ENCODE measurements at regions of chr6 and their contacts with region 1.

Region 1: GRCh38 chr6:75934643-75935472 is 137.6 kb downstream of the IMPG1 start:
- DNase-seq: peak in 1 of 2 donors; percentile 69
- H3K4me3 ChIP-seq: peak overlapping the region; percentile 51 to 60
- H3K27ac ChIP-seq: no peak overlapping the region
- H3K4me1 ChIP-seq: peaks cover 0 to 12% of the 10 kb centered on the region in 2 donors
- H3K27me3 ChIP-seq: no peaks in the 10 kb centered on the region
- CTCF ChIP-seq: peak; percentile 22 to 81 (median 67)

Region 2: DNA sequence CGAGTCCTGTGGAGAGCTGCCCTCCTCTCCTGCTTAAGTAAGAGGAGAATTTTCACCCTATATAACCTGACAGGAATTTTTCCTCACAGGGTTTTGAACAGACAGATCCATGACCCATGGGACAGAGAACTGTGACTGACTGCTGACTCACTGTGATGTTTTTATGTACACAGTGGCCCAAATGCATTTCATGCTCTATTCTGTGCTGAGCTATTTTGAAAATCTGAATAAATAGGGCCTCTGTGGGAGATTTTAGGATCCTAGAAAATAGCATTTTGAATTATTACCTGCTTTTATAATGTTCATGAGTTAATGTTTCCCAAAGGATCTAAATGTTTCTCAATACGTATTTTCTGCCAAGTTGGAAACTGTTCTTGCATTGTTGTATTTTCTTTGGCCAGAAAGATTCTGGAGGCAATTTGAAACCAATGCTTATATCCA is 951.0 kb after region 1 on chr6:
- intact Hi-C with region 1: loop called (anchors 10 kb)
- DNase-seq: peak in 1 of 2 donors; percentile 64
- H3K4me3 ChIP-seq: no peak overlapping the region
- H3K27ac ChIP-seq: peak overlapping the region; percentile 1 to 76
- H3K4me1 ChIP-seq: peaks cover 0 to 12% of the 10 kb centered on the region in 2 donors
- H3K27me3 ChIP-seq: no peaks in the 10 kb centered on the region
- CTCF ChIP-seq: no peak

Measured in ascending aorta (tissue), 2 donors.